IMR-90 (cell line): ENCODE measurements at regions of chr9 and their contacts with region 1.

Region 1: DNA sequence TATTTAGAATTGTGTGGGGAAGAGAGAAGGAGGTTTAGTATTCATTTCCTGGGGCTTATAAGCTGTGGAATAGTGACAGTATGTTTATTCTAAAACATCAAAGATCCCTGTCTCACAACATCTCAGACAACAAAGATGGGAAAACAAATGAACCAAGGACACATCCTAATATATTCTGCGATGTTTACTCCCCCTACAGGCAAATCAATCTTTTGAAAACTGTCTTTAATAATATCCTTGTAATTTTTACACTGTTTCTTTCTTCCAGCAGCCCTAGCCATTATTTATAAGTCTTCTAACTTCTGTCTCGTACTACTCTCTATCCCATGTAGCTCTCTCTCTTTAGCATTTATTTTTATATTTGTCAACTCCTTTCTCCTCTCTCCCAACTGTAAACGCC is 33.5 kb upstream of the TMEM252 start:
- DNase-seq: no peak
- ATAC-seq: no peak
- H3K4me3 ChIP-seq: no peak overlapping the region
- H3K27ac ChIP-seq: no peak overlapping the region
- H3K4me1 ChIP-seq: no peaks in the 10 kb centered on the region
- H3K27me3 ChIP-seq: peaks cover 1% of the 10 kb centered on the region; the same call in 1 of the 2 replicates
- CTCF ChIP-seq: peak; percentile 24; the same call in 1 of the 2 replicates
- POLR2A ChIP-seq: no peak
- RAD21 ChIP-seq: peak; percentile 22; the same call in 1 of the 2 replicates

Region 2: GRCh38 chr9:68427216-68427977 is 146.8 kb before region 1 on chr9:
- CTCF ChIA-PET with region 1: no interaction called
- POLR2A ChIA-PET with region 1: no interaction called
- dilution Hi-C with region 1: no loop called
- in situ Hi-C with region 1: no loop called
- intact Hi-C with region 1: no loop called
- DNase-seq: no peak
- ATAC-seq: peak; percentile 24; the same call in 1 of the 2 replicates
- H3K4me3 ChIP-seq: no peak overlapping the region
- H3K27ac ChIP-seq: no peak overlapping the region; the same call in 1 of the 2 replicates
- H3K4me1 ChIP-seq: peaks cover 5% of the 10 kb centered on the region
- H3K27me3 ChIP-seq: no peaks in the 10 kb centered on the region
- CTCF ChIP-seq: no peak
- POLR2A ChIP-seq: no peak
- RAD21 ChIP-seq: no peak

Region 3: DNA sequence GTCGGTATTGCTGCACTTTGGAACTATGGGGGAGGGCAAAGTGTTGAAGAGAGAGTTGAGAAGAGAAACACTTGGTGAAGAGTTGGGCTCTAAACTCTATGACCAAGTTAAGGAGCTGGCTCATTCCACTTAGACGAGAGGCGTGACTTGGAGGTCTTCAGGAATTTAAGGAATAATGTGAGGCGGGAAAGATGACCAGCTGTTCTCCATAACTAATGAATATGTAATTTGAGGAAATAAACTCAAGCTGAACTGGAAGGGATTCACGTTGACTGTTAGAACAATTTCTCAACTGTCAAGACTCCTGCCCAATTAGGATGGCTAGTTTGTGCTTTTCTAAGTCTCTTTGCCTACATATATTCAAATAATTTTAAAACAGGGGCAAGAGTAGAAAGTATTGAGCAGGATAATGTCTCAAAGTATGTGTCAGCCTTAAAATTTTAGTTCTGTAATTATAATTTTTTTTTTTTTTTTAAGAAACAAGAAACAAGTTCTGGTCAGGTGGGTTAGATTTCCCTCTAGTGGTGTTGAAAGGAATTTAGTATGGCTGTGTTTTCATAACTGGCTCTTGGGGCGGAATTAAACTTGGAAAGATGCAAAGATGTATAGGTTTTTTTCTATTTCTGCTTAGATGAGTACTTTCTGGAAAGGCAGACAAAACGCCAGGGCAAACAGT is 66.9 kb before region 1 on chr9:
- CTCF ChIA-PET with region 1: no interaction called
- POLR2A ChIA-PET with region 1: no interaction called
- dilution Hi-C with region 1: no loop called
- in situ Hi-C with region 1: no loop called
- intact Hi-C with region 1: loop called (anchors 5 kb)
- DNase-seq: peak; percentile 51
- ATAC-seq: peak; percentile 66; the same call in 1 of the 2 replicates
- H3K4me3 ChIP-seq: no peak overlapping the region
- H3K27ac ChIP-seq: no peak overlapping the region
- H3K4me1 ChIP-seq: peaks cover 2% of the 10 kb centered on the region; the same call in 1 of the 2 replicates
- H3K27me3 ChIP-seq: no peaks in the 10 kb centered on the region
- CTCF ChIP-seq: peak; percentile 68
- POLR2A ChIP-seq: no peak
- RAD21 ChIP-seq: peak; percentile 66